Mammary epithelial cell (primary cell): ENCODE measurements at regions of chr11 and their contacts with region 1.

Region 1: DNA sequence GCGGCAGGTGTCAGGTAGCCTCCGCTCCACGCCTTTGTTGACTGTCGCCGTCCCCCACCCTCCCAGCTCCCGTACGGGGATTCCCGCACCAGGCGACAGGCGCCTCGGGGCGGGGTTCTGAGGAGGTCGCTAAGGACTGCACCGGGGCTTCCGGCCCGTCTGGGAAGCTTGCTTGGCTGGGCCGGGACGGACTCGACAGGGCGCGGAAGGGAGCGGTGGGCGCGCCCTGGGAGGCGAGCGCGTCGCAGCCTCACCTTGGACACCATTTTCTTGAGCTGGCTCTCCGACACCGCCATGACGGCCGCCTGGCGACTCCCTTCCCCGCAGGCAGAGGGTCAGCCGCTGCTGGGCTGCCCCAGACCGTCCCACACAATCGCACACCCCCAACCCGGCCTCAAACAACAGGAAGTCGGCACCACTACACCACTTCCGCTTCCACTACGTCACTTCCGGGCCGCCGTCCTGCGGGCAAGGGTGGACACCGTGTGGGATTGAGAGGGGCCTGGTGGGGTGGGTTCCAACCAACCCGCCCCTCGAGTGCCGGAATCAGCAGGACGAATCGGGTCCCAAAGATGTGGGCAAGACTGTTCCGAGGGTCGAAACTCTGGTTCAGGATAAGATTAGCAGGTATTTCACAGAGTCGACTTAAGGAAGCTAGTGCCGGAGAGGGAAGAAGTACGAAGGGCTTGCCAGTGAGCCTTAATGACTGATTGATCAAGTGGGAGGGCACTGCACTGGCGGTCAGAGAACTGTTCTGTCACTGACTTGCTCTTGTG is at the start of gene TSG101:
- DNase-seq: peak; percentile 89
- H3K4me3 ChIP-seq: peak within 1 kb of the TSS; percentile 78 to 96 (median 79)
- H3K27ac ChIP-seq: peak within 1 kb of the TSS; percentile 96
- H3K4me1 ChIP-seq: peaks cover 8% of the 10 kb centered on the region
- H3K27me3 ChIP-seq: no peaks in the 10 kb centered on the region
- CTCF ChIP-seq: no peak
- total RNA-seq, gene TSG101: 54.1 to 72.3 TPM

Region 2: GRCh38 chr11:18277565-18278271 is 249.0 kb before region 1 on chr11:
- CTCF ChIA-PET with region 1: no interaction called
- dilution Hi-C with region 1: no loop called
- in situ Hi-C with region 1: no loop called
- intact Hi-C with region 1: no loop called
- DNase-seq: no peak
- H3K4me3 ChIP-seq: no peak overlapping the region
- H3K27ac ChIP-seq: no peak overlapping the region
- H3K4me1 ChIP-seq: no peaks in the 10 kb centered on the region
- H3K27me3 ChIP-seq: no peaks in the 10 kb centered on the region
- CTCF ChIP-seq: no peak

Region 3: GRCh38 chr11:18310800-18311340 is 215.8 kb before region 1 on chr11:
- CTCF ChIA-PET with region 1: no interaction called
- dilution Hi-C with region 1: no loop called
- in situ Hi-C with region 1: no loop called
- intact Hi-C with region 1: loop called (anchors 5 kb)
- DNase-seq: peak; percentile 95
- H3K4me3 ChIP-seq: no peak overlapping the region
- H3K27ac ChIP-seq: peak overlapping the region; percentile 94
- H3K4me1 ChIP-seq: peaks cover 50% of the 10 kb centered on the region
- H3K27me3 ChIP-seq: no peaks in the 10 kb centered on the region
- CTCF ChIP-seq: no peak

Region 4: DNA sequence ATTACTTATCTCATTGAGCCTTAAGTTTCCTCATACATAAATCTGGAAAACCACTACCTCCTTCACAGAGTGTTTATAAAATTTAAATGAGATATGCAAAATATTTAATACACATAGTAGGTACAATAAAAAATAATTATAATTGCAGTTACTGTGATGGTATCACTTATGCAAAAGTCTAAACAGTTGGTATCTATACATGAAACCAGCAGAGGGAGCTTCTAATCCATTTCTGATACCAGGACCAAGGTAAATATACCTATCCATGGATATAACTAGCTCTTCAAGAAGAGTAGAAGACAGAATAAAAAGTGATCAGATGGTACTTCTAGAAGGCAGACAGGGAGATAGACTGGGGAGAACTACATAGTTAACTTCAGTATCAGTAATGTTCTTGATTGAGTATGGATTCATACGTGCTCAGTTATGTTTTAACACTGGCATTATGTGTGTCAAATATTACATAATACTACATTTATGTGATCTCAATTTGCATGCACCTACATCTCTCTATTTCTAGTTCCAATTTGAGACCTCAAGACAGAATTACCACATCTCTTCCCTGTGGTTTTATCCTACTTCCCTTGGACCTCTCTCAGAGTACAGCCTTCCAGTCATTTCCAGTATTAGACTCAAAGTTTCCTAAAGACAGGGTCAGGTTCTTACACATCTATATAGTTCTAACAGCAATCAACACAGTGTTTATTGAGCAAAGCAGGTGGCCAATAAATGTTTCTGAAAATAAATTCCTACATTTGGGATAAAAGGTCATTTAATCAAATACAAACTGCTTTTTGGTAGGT is 13.7 kb after region 1 on chr11:
- CTCF ChIA-PET with region 1: no interaction called
- dilution Hi-C with region 1: no loop called
- in situ Hi-C with region 1: no loop called
- intact Hi-C with region 1: no loop called
- DNase-seq: peak; percentile 16
- H3K4me3 ChIP-seq: no peak overlapping the region
- H3K27ac ChIP-seq: no peak overlapping the region
- H3K4me1 ChIP-seq: no peaks in the 10 kb centered on the region
- H3K27me3 ChIP-seq: no peaks in the 10 kb centered on the region
- CTCF ChIP-seq: peak; percentile 37 to 57

Region 5: GRCh38 chr11:18594999-18595749 is 68.5 kb after region 1 on chr11:
- CTCF ChIA-PET with region 1: no interaction called
- dilution Hi-C with region 1: loop called (anchors 5 kb)
- in situ Hi-C with region 1: no loop called
- intact Hi-C with region 1: no loop called
- DNase-seq: peak; percentile 89
- H3K4me3 ChIP-seq: no peak overlapping the region
- H3K27ac ChIP-seq: peak overlapping the region; percentile 2
- H3K4me1 ChIP-seq: peaks cover 25% of the 10 kb centered on the region
- H3K27me3 ChIP-seq: no peaks in the 10 kb centered on the region
- CTCF ChIP-seq: no peak

Region 6: GRCh38 chr11:18768472-18768901 is 241.8 kb after region 1 on chr11:
- CTCF ChIA-PET with region 1: interaction called, 11 read pairs
- dilution Hi-C with region 1: no loop called
- in situ Hi-C with region 1: no loop called
- intact Hi-C with region 1: no loop called
- DNase-seq: no peak
- H3K4me3 ChIP-seq: no peak overlapping the region
- H3K27ac ChIP-seq: no peak overlapping the region
- H3K4me1 ChIP-seq: peaks cover 9% of the 10 kb centered on the region
- H3K27me3 ChIP-seq: no peaks in the 10 kb centered on the region
- CTCF ChIP-seq: no peak